Calu3 (cell line): ENCODE measurements at regions of chr1 and their contacts with region 1.

Region 1: GRCh38 chr1:55204997-55205396 is 10.2 kb downstream of the USP24 start:
- DNase-seq: no peak
- H3K4me3 Mint-ChIP-seq: no peak overlapping the region
- H3K27ac Mint-ChIP-seq: no peak overlapping the region
- H3K4me1 Mint-ChIP-seq: peaks cover 30% of the 10 kb centered on the region
- H3K27me3 Mint-ChIP-seq: no peaks in the 10 kb centered on the region
- CTCF ChIP-seq: no peak

Region 2: DNA sequence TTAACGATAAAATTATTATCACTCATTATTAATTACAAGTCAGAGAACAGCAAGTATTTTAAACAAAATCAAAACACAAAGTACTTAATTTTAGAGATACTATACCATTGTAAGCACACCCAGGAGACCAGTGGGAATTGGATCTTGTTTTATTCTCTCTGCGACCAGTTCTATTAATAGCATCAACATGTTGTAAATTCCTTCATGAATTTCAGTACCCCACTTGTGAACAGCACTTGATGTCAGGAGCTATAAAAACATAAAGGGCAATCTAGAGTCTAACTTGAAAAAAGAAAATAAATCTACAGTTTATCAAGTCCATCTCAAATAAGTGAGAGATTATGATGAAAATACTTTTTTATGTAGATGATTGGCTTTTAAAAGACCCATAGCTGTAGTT is 32.7 kb before region 1 on chr1:
- CTCF ChIA-PET with region 1: no interaction called
- intact Hi-C with region 1: loop called (anchors 5 kb)
- DNase-seq: no peak
- H3K4me3 Mint-ChIP-seq: no peak overlapping the region
- H3K27ac Mint-ChIP-seq: no peak overlapping the region
- H3K4me1 Mint-ChIP-seq: peaks cover 25% of the 10 kb centered on the region
- H3K27me3 Mint-ChIP-seq: no peaks in the 10 kb centered on the region
- CTCF ChIP-seq: no peak

Region 3: DNA sequence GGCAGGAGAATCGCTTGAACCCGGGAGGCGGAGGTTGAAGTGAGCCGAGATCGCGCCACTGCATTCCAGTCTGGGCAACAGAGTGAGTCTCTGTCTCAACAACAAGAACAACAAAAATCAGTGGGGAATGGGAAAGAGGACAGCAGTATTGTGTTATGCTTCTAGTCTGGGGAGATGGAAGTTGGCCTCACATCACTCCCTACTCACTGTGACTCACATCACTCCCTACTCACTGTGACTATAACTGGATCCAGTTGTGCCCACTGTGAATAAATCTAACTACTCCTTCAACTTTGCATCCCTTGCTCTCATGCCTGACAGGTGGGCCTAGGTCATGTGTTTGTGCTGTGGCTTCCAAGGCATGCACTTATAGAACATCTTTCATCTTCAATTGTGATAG is 295.6 kb after region 1 on chr1:
- CTCF ChIA-PET with region 1: no interaction called
- intact Hi-C with region 1: no loop called
- DNase-seq: no peak
- H3K4me3 Mint-ChIP-seq: no peak overlapping the region
- H3K27ac Mint-ChIP-seq: no peak overlapping the region
- H3K4me1 Mint-ChIP-seq: peaks cover 14% of the 10 kb centered on the region
- H3K27me3 Mint-ChIP-seq: no peaks in the 10 kb centered on the region
- CTCF ChIP-seq: no peak